CD8-positive, alpha-beta T cell (primary cell): ENCODE measurements at regions of chr18 and their contacts with region 1.

Region 1: GRCh38 chr18:62714671-62715435 is 488 bp upstream of the PHLPP1 start:
- DNase-seq: peak; percentile 78 to 97 (median 92)
- ATAC-seq: peak; percentile 71
- H3K4me3 ChIP-seq: peak overlapping the region; percentile 64 to 71
- H3K4me3 Mint-ChIP-seq: peak overlapping the region; percentile 97
- H3K27ac ChIP-seq: peak overlapping the region; percentile 80 to 89
- H3K27ac Mint-ChIP-seq: peak overlapping the region; percentile 99
- H3K4me1 ChIP-seq: peaks cover 15% of the 10 kb centered on the region
- H3K4me1 Mint-ChIP-seq: peaks cover 37% of the 10 kb centered on the region
- H3K27me3 ChIP-seq: no peaks in the 10 kb centered on the region
- H3K27me3 Mint-ChIP-seq: no peaks in the 10 kb centered on the region
- CTCF ChIP-seq: peak; percentile 77

Region 2: GRCh38 chr18:62186774-62187542 is 527.9 kb before region 1 on chr18 and contains the starts of genes PIGN and RELCH:
- CTCF ChIA-PET with region 1: no interaction called
- POLR2A ChIA-PET with region 1: interaction called, 4 read pairs
- intact Hi-C with region 1: loop called (anchors 1 to 2 kb)
- DNase-seq: peak; percentile 89 to 99 (median 93)
- ATAC-seq: peak; percentile 91
- H3K4me3 ChIP-seq: peak within 1 kb of the TSS; percentile 92 to 99
- H3K4me3 Mint-ChIP-seq: peak within 1 kb of the TSS; percentile 100
- H3K27ac ChIP-seq: peak within 1 kb of the TSS; percentile 63 to 79
- H3K27ac Mint-ChIP-seq: peak within 1 kb of the TSS; percentile 97
- H3K4me1 ChIP-seq: peaks cover 43% of the 10 kb centered on the region
- H3K4me1 Mint-ChIP-seq: peaks cover 63% of the 10 kb centered on the region
- H3K27me3 ChIP-seq: no peaks in the 10 kb centered on the region
- H3K27me3 Mint-ChIP-seq: no peaks in the 10 kb centered on the region
- CTCF ChIP-seq: no peak
- total RNA-seq, gene PIGN: 8.1 to 9.9 TPM
- total RNA-seq, gene RELCH: 39.2 to 40.5 TPM

Region 3: GRCh38 chr18:62522504-62523254 is 192.2 kb before region 1 on chr18 and contains the start of gene ZCCHC2:
- CTCF ChIA-PET with region 1: interaction called, 3 read pairs
- POLR2A ChIA-PET with region 1: interaction called, 8 read pairs
- intact Hi-C with region 1: loop called (anchors 1 to 2 kb)
- DNase-seq: peak; percentile 95 to 100 (median 98)
- ATAC-seq: peak; percentile 77
- H3K4me3 ChIP-seq: peak within 1 kb of the TSS; percentile 88 to 89
- H3K4me3 Mint-ChIP-seq: peak within 1 kb of the TSS; percentile 95
- H3K27ac ChIP-seq: peak within 1 kb of the TSS; percentile 86 to 89
- H3K27ac Mint-ChIP-seq: peak within 1 kb of the TSS; percentile 89
- H3K4me1 ChIP-seq: peaks cover 32% of the 10 kb centered on the region
- H3K4me1 Mint-ChIP-seq: peaks cover 37% of the 10 kb centered on the region
- H3K27me3 ChIP-seq: no peaks in the 10 kb centered on the region
- H3K27me3 Mint-ChIP-seq: no peaks in the 10 kb centered on the region
- CTCF ChIP-seq: no peak
- total RNA-seq, gene ZCCHC2: 88.7 to 90.9 TPM

Region 4: DNA sequence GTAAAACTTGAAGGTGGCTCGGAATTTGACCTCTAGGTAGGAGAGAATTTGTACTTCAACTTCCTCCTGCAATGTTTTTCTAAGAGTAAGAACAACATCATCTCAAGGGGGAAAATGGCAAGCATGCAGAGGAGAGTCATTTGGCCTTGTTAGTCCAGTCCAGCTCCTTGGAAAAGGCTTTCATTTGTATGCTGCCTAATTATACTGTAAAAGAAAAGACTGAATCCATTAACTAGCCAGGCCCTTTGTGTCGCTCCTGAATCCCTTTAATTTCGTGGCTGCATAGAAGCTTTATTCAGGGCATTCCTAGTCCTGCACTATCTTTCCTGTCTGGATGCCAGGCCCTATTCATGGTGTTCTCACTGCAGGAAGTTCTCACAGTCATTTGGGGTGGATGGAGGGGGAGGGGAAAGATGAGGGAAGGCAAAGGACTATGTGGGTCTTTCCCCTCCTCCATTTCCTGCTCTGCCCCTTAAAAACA is 36.5 kb after region 1 on chr18:
- CTCF ChIA-PET with region 1: no interaction called
- POLR2A ChIA-PET with region 1: no interaction called
- intact Hi-C with region 1: no loop called
- DNase-seq: no peak
- ATAC-seq: no peak
- H3K4me3 ChIP-seq: no peak overlapping the region
- H3K4me3 Mint-ChIP-seq: no peak overlapping the region
- H3K27ac ChIP-seq: no peak overlapping the region
- H3K27ac Mint-ChIP-seq: no peak overlapping the region
- H3K4me1 ChIP-seq: peaks cover 5% of the 10 kb centered on the region
- H3K4me1 Mint-ChIP-seq: peaks cover 19% of the 10 kb centered on the region
- H3K27me3 ChIP-seq: no peaks in the 10 kb centered on the region
- H3K27me3 Mint-ChIP-seq: no peaks in the 10 kb centered on the region
- CTCF ChIP-seq: no peak

Region 5: GRCh38 chr18:62802523-62802922 is 87.7 kb after region 1 on chr18:
- CTCF ChIA-PET with region 1: no interaction called
- POLR2A ChIA-PET with region 1: no interaction called
- intact Hi-C with region 1: loop called (anchors 2 to 5 kb)
- DNase-seq: peak in 2 of 9 experiments; percentile 9 to 17
- ATAC-seq: peak; percentile 34
- H3K4me3 ChIP-seq: no peak overlapping the region
- H3K4me3 Mint-ChIP-seq: no peak overlapping the region
- H3K27ac ChIP-seq: no peak overlapping the region
- H3K27ac Mint-ChIP-seq: no peak overlapping the region
- H3K4me1 ChIP-seq: no peaks in the 10 kb centered on the region
- H3K4me1 Mint-ChIP-seq: no peaks in the 10 kb centered on the region
- H3K27me3 ChIP-seq: no peaks in the 10 kb centered on the region
- H3K27me3 Mint-ChIP-seq: no peaks in the 10 kb centered on the region
- CTCF ChIP-seq: no peak

Region 6: GRCh38 chr18:62812876-62813275 is 98.0 kb after region 1 on chr18:
- CTCF ChIA-PET with region 1: no interaction called
- POLR2A ChIA-PET with region 1: no interaction called
- intact Hi-C with region 1: no loop called
- DNase-seq: no peak
- ATAC-seq: no peak
- H3K4me3 ChIP-seq: no peak overlapping the region
- H3K4me3 Mint-ChIP-seq: no peak overlapping the region
- H3K27ac ChIP-seq: no peak overlapping the region
- H3K27ac Mint-ChIP-seq: no peak overlapping the region
- H3K4me1 ChIP-seq: no peaks in the 10 kb centered on the region
- H3K4me1 Mint-ChIP-seq: peaks cover 3% of the 10 kb centered on the region
- H3K27me3 ChIP-seq: no peaks in the 10 kb centered on the region
- H3K27me3 Mint-ChIP-seq: no peaks in the 10 kb centered on the region
- CTCF ChIP-seq: no peak

Region 7: DNA sequence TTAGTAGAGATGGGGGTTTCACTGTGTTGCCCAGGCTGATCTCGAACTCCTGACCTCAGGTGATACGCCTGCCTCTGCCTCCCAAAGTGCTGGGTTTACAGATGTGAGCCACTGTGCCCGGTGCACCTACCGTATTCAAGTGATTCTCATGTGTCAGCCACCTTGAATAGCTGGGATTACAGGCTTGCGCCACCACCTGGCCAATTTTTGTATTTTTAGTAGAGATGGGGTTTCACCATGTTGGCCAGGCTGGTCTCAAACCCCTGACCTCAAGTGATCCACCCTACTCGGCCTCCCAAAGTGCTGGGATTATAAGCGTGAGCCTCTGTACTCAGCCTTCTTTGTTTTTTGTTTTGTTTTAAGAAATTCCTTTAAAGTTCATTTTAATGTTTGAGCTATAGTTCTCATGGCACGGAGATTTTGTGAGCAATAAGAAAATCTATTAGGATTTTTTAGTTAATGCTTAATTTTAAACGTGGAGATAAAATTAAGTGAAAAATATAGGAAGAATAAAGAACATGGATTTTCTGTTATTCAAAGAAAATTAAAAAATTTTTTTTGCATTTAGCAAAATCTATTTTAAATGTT is 243.1 kb after region 1 on chr18:
- CTCF ChIA-PET with region 1: interaction called, 10 read pairs
- POLR2A ChIA-PET with region 1: interaction called, 3 read pairs
- intact Hi-C with region 1: loop called (anchors 1 kb)
- DNase-seq: peak in 5 of 9 experiments; percentile 20 to 60 (median 36)
- ATAC-seq: peak; percentile 48
- H3K4me3 ChIP-seq: no peak overlapping the region
- H3K4me3 Mint-ChIP-seq: no peak overlapping the region
- H3K27ac ChIP-seq: no peak overlapping the region
- H3K27ac Mint-ChIP-seq: no peak overlapping the region
- H3K4me1 ChIP-seq: peaks cover 10% of the 10 kb centered on the region
- H3K4me1 Mint-ChIP-seq: peaks cover 13% of the 10 kb centered on the region
- H3K27me3 ChIP-seq: no peaks in the 10 kb centered on the region
- H3K27me3 Mint-ChIP-seq: no peaks in the 10 kb centered on the region
- CTCF ChIP-seq: peak; percentile 34

Region 8: DNA sequence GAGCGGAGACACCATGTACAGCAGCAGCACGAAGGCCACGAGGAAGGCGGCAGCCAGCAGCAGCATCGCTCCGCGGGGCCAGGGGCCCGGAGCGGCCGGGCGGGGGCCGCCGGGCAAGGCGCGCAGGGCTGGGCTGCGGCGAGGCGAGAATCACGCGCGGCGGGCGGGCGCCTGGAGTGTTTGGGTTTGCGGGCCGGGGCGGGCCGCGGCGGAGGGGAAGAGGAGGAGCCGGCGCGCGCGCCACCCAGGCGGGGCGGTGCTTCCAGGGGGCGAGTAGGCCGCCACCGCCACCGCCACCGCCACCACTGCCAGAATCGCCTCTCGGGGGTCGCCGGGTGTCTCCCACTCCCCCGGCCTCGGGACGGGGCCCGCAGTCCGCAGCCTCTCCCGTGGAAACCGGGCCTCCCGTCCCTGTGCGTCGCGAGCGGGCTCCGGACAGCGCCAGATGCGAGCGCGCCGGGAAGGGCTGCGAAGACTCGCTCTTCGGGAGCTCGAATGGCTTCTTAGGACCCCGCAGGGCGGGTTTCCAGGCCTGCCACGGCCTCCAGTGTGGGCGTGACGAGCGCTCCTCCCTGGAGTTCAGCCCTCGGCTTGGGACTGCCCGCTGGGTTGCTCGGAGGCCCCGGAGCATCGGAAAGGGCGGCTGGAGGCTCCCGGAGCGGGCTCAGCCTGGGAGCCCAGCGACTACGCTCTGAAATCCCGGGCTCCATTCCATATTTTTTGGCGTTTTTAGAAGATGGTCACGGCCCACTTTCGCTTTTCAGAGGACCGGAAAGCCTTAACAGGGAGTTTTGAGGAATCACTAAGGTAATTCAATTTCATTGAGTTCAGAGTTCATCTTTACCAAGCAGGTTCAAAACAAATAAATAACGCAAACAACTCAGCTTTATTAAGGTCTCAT is 652.5 kb after region 1 on chr18 and contains the start of gene KDSR:
- CTCF ChIA-PET with region 1: interaction called, 4 read pairs
- POLR2A ChIA-PET with region 1: interaction called, 4 read pairs
- intact Hi-C with region 1: loop called (anchors 1 to 2 kb)
- DNase-seq: peak; percentile 58 to 87 (median 78)
- ATAC-seq: peak; percentile 82
- H3K4me3 ChIP-seq: peak within 1 kb of the TSS; percentile 87 to 89
- H3K4me3 Mint-ChIP-seq: peak within 1 kb of the TSS; percentile 89
- H3K27ac ChIP-seq: peak within 1 kb of the TSS; percentile 63 to 65
- H3K27ac Mint-ChIP-seq: peak within 1 kb of the TSS; percentile 86
- H3K4me1 ChIP-seq: peaks cover 33% of the 10 kb centered on the region
- H3K4me1 Mint-ChIP-seq: peaks cover 45% of the 10 kb centered on the region
- H3K27me3 ChIP-seq: no peaks in the 10 kb centered on the region
- H3K27me3 Mint-ChIP-seq: no peaks in the 10 kb centered on the region
- CTCF ChIP-seq: no peak
- total RNA-seq, gene KDSR: 12.8 to 13.9 TPM

Region 9: GRCh38 chr18:63969960-63970802 is 1255.3 kb after region 1 on chr18 and contains the start of gene SERPINB8:
- CTCF ChIA-PET with region 1: no interaction called
- POLR2A ChIA-PET with region 1: no interaction called
- intact Hi-C with region 1: loop called in 1 of 2 experiments (anchors 10 kb)
- DNase-seq: peak; percentile 48 to 88 (median 79)
- ATAC-seq: peak; percentile 87
- H3K4me3 ChIP-seq: peak within 1 kb of the TSS; percentile 68 to 97
- H3K4me3 Mint-ChIP-seq: peak within 1 kb of the TSS; percentile 98
- H3K27ac ChIP-seq: peak within 1 kb of the TSS; percentile 78 to 92
- H3K27ac Mint-ChIP-seq: peak within 1 kb of the TSS; percentile 96
- H3K4me1 ChIP-seq: peaks cover 16% of the 10 kb centered on the region
- H3K4me1 Mint-ChIP-seq: peaks cover 41% of the 10 kb centered on the region
- H3K27me3 ChIP-seq: no peaks in the 10 kb centered on the region
- H3K27me3 Mint-ChIP-seq: no peaks in the 10 kb centered on the region
- CTCF ChIP-seq: no peak
- total RNA-seq, gene SERPINB8: 14.8 to 15.7 TPM